Body of pancreas (tissue), 4 donors: ENCODE measurements at regions of chr10 and their contacts with region 1.

Region 1: GRCh38 chr10:124791378-124792348 is at the start of gene EEF1AKMT2:
- DNase-seq: peak; percentile 77 to 85 (median 82)
- ATAC-seq: peak; percentile 97
- H3K4me3 ChIP-seq: peak within 1 kb of the TSS; percentile 91 to 97
- H3K27ac ChIP-seq: peak within 1 kb of the TSS; percentile 66 to 93 (median 86)
- H3K4me1 ChIP-seq: peaks cover 9% of the 10 kb centered on the region
- H3K27me3 ChIP-seq: no peaks in the 10 kb centered on the region
- CTCF ChIP-seq: peak; percentile 42 to 70 (median 60)
- POLR2A ChIP-seq: peak; percentile 75 to 88 (median 85)
- total RNA-seq, gene EEF1AKMT2: 2.6 to 14.3 TPM

Region 2: GRCh38 chr10:124722798-124723783 is 68.6 kb before region 1 on chr10:
- intact Hi-C with region 1: no loop called
- DNase-seq: no peak
- ATAC-seq: no peak
- H3K4me3 ChIP-seq: no peak overlapping the region
- H3K27ac ChIP-seq: peak overlapping the region in 3 of 4 donors; percentile 7 to 78 (median 56)
- H3K4me1 ChIP-seq: peaks cover 65% of the 10 kb centered on the region
- H3K27me3 ChIP-seq: no peaks in the 10 kb centered on the region
- CTCF ChIP-seq: no peak
- POLR2A ChIP-seq: peak in 1 of 3 donors; percentile 43

Region 3: DNA sequence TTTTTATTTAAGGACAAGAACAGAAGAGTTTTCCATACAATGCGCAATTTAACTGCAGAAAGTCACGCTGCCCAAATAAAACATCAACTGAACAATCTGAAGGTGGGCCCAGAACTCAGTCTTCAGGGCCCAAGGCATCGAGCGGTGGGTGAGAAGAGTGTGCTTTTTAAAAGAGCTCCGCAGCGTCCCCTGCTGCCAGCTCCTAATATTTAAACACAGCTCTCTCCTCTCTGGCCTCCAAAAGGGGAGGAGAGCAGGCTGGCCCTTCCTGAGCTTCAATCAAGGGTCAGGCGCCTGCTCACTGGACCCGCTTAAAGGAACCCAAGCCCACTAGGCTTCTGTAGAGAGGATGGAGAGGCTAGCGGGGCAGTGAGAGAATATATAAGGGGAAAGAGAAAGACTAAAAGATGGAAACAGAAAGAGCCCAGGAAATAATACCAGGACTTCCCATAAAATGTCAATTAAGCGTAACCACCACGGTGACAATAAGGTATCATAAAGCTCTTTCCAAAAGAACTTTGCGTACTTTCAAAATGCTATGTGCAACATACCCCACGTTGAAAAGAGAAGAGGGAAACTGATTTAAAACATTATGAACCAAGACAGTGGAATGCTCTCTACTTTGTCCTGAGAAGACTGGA is 50.3 kb before region 1 on chr10:
- intact Hi-C with region 1: loop called (anchors 10 kb)
- DNase-seq: peak; percentile 78 to 89 (median 83)
- ATAC-seq: peak; percentile 28
- H3K4me3 ChIP-seq: no peak overlapping the region
- H3K27ac ChIP-seq: peak overlapping the region in 3 of 4 donors; percentile 68 to 75 (median 70)
- H3K4me1 ChIP-seq: peaks cover 67% of the 10 kb centered on the region
- H3K27me3 ChIP-seq: no peaks in the 10 kb centered on the region
- CTCF ChIP-seq: peak; percentile 51 to 88 (median 83)
- POLR2A ChIP-seq: no peak